ENCODE measurements at regions of chr2 and their contacts with region 1.

Region 1: DNA sequence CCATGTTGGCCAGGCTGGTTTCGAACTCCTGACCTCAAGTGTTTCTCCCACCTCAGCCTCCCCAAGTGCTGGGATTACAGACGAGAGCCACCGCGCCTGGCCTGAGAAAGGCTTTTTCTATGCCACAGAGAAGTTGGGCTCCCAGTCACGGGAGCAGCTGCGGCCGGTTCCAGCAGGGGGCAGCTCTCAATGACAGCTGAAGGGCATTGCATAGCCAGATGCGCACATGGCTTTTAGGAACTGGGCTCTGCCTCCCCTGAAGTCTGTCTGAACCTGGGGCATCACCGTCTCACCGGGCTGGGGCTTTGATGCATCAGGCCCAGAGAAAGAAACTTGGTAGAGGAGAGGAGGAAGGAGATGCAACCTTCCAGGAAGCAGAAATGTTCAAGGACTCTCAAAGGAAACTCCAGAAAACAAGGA is 84.2 kb upstream of the LAPTM4A start:
- DNase-seq: peak in 6 of 10 donors; percentile 25 to 64 (median 47)
- H3K4me3 ChIP-seq: no peak overlapping the region
- H3K27ac ChIP-seq: no peak overlapping the region
- H3K27me3 ChIP-seq: peaks cover 0 to 2% (median 0%) of the 10 kb centered on the region in 45 donors
- CTCF ChIP-seq: peak in 54 of 56 donors; percentile 12 to 71 (median 55)

Region 2: DNA sequence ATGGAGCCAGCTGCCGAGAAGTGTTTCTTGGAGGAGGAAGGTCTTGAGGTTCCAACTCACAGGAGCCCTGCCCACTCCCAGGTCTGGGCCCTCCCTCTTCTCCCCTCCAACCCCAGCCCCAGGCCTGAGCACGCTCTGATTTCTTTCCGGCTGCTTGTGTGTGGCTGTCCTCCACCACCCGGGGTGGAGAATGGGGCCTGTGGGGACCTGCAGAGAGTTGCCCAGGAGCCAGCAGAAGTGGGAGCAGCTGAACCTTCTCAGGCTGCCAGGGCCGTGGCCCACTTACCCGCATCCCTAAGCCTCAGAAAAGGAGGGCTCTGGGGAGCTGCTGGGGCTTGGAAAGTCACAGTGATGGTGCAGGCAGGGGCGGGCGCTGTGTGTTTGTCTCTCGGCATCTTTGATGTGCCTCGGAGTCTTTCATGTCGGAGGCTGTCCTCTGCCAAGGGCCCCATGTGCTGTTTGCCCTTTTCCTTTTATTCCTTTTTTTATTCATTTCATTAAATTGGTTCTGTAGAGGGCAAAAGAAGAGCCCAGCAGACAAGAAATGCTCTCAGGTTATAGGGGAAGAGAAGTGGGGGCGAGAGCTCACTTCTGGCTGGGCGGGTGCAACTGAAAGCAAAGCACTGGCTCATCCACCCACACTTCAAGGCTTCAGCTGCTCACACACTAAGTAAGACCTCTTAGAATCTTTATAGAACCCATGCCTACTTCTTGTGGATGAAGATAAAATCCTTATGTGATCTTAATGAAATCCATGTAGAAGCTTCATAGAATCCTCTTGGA is 36.8 kb after region 1 on chr2:
- intact Hi-C with region 1: no loop called
- DNase-seq: no peak
- H3K4me3 ChIP-seq: no peak overlapping the region
- H3K27ac ChIP-seq: no peak overlapping the region
- H3K27me3 ChIP-seq: peaks cover 0 to 4% (median 0%) of the 10 kb centered on the region in 45 donors
- CTCF ChIP-seq: no peak

Region 3: DNA sequence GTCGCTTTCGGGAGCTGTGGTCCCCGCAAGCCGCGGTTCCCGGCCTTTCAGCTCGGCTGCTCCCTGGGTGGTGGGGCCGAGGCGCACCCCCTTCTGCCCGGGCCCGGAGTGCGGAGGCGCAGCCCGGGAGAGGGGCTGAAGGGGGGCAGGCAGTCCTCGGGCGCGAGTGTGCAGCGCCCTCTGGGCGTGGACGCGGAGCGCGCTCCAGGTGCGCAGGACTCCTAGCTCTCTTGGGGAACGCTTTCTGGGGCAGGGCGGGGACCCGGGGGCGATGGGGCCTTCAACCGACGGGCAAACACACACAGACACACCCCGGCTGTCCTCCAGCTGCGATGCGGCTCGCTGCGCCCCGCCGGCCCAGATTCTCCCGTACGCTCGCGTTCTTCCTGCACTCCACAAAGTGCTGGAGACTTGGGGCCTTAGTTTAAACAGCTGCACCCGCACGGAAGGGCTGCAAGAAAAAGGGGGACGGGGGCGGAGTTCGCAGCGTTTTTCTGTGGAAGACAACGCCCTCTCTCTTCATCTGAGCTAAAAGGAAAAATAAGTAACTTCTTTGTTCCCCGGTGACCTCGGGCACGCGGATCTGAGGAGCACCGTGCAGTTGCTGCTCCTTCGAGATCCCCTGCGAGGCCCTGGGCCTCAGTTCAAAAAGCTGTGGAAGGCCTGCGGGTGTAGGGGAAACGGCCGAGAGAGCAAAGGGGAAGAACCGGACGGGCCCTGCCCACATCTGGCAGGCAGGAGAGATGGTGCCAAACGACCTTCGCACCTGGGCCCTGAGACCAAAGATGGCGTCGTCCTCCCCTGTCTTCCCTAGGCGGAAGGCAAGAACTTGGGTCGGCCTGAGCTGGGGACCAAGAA is 89.9 kb after region 1 on chr2:
- intact Hi-C with region 1: loop called in 1 of 2 experiments (anchors 5 kb)
- DNase-seq: peak in 5 of 10 donors; percentile 35 to 65 (median 45)
- H3K4me3 ChIP-seq: peak overlapping the region; percentile 43 to 74 (median 62)
- H3K27ac ChIP-seq: no peak overlapping the region
- H3K27me3 ChIP-seq: peaks cover 0 to 10% (median 0%) of the 10 kb centered on the region in 45 donors
- CTCF ChIP-seq: peak in 51 of 56 donors; percentile 4 to 60 (median 41)

Region 4: GRCh38 chr2:20326163-20326780 is 190.6 kb after region 1 on chr2:
- intact Hi-C with region 1: loop called in 1 of 2 experiments (anchors 5 kb)
- DNase-seq: peak in 9 of 10 donors; percentile 33 to 75 (median 56)
- H3K4me3 ChIP-seq: no peak overlapping the region
- H3K27ac ChIP-seq: peak overlapping the region in 10 of 59 donors; percentile 1 to 51 (median 26)
- H3K27me3 ChIP-seq: no peaks in the 10 kb centered on the region
- CTCF ChIP-seq: peak; percentile 41 to 88 (median 71)

Region 5: DNA sequence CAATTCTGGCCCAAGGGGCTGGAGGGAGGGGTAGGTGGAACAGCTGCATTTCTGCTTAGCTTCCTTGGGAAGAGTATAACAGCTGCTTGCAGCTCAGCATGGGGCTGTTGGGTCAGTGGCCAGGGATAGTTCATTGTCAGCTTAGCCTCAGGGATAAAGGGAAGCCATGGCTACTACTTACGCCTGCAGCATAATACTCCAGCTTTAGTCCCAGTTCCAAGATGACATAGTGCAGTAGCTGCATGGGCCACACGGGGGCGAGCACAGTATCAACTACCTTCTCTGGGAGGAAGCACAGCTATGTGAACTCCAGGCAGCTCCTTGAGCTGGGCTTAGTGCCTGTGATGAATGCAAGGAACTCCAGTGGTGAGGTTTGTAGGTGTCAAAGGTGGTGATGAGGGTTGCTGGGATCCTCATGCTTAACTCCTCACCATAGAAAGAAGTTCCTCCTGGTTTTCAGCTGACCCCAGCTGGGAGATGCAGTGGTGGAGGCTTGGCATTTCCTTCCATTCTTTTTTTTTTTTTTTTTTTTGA is 275.8 kb after region 1 on chr2:
- intact Hi-C with region 1: no loop called
- DNase-seq: peak in 8 of 10 donors; percentile 38 to 78 (median 62)
- H3K4me3 ChIP-seq: no peak overlapping the region
- H3K27ac ChIP-seq: no peak overlapping the region
- H3K27me3 ChIP-seq: no peaks in the 10 kb centered on the region
- CTCF ChIP-seq: peak; percentile 22 to 74 (median 60)

Region 6: DNA sequence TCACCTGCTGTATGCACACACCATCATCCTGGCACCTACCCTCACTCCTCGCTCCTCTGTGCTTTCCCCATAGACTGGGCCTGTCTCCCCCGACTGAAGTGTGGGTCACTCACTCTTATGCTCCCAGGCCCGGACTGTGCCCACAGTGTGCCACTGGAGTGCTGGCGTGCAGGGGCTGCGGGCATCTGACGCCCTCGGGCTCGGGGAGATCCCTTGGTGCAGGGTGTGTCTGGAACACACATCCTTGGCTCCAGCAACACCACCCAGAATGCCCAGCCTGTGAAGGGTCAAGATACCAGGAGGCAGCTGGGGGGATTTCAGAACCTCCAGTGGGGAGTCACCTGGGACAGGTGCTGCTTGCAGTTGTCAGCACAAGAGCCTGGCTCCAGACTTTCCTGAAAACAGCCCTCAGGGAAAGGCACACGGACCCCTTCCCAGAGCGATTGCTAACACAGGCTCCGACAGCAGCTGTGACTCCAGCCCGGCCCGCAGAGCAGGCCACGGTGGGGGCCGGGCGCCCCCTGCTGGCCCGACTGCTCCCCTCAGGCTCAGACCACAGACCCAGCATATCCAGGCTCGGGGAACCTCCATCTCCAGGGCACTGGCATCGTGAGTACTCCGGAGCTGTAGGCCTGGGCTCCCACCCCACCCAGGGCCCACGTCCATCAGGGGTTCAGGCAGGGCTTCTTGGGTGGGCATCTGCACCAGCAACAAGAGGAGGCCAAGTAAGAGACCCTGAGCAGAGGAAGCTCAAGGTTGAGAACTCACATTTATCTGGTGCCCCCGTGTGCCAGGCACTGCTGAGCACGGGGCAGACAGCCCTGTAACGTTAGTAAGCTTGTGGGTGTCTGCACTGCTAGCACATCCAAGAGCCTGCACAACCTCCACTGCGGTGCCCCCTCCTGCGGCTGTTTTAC is 506.7 kb after region 1 on chr2:
- intact Hi-C with region 1: loop called in 1 of 2 experiments (anchors 10 kb)
- DNase-seq: peak; percentile 72 to 91 (median 84)
- H3K4me3 ChIP-seq: peak overlapping the region in 5 of 59 donors; percentile 2 to 17 (median 8)
- H3K27ac ChIP-seq: peak overlapping the region in 48 of 59 donors; percentile 10 to 85 (median 64)
- H3K27me3 ChIP-seq: no peaks in the 10 kb centered on the region
- CTCF ChIP-seq: peak; percentile 54 to 98 (median 94)